Activated CD4-positive, alpha-beta T cell treated with anti-CD3 and anti-CD28 coated beads for 36 hours (primary cell): ENCODE measurements at regions of chr16 and their contacts with region 1.

Region 1: DNA sequence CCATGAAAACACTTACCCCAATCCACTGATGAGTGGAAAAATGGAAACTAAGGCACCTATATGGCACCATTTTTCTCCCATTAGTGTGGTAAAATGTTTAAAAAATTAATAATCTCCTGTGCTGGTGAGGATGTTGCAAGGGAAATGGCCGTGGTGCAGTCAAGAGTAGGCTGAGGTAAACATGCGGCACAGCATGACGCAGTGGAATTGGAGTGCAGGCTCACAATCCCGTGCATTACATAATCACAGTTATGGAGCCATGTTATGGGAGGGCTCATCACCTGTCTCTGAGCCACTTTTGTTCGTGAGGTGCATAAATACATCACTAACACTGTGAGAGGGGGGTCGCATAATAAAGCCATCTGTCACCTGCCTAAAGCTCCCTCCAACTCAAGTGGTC is 164.4 kb upstream of the XYLT1 start:
- DNase-seq: no peak
- ATAC-seq: no peak
- H3K4me3 Mint-ChIP-seq: no peak overlapping the region
- H3K27ac Mint-ChIP-seq: no peak overlapping the region
- H3K4me1 Mint-ChIP-seq: peaks cover 4% of the 10 kb centered on the region
- H3K27me3 Mint-ChIP-seq: peaks cover 24% of the 10 kb centered on the region

Region 2: DNA sequence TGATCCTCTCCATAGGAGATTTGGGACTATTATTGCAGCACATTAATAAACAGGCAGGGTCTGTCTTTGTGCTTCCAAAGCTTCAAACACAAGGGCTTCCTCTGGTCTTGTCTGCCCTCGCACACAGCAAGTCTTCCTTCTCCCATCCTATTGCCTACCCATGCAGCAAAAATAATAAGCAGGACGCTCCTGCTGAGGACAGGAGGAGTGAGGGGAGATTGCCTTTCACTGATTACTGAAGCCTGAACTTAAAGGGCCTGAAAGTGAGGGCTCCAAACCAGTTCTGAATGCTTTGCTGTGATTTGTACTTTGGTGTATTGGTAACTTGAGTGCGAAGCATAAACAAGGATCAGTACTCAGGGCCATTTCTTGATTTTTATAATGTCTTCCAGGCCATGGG is 33.2 kb after region 1 on chr16:
- CTCF ChIA-PET with region 1: no interaction called
- POLR2A ChIA-PET with region 1: no interaction called
- intact Hi-C with region 1: no loop called
- DNase-seq: no peak
- ATAC-seq: no peak
- H3K4me3 Mint-ChIP-seq: no peak overlapping the region
- H3K27ac Mint-ChIP-seq: no peak overlapping the region
- H3K4me1 Mint-ChIP-seq: no peaks in the 10 kb centered on the region
- H3K27me3 Mint-ChIP-seq: peaks cover 11% of the 10 kb centered on the region

Region 3: DNA sequence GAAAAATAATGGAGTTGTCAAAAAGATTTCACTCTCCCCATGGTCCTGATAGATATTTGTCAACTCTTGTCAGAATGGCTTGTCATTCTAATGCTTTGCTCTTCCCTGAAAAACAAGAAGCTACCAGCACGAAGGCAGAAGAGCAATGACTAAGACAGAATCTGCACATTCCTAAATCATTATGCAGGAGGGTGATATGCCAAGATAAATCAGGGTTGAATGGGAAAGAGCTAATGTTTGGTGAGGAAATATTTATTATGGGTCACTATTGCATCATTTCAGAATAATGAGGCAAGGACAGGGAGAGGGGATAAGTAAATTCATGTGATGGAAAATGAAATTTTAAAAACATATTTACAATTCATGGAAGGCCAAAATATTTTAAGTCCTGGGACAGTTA is 133.1 kb after region 1 on chr16:
- CTCF ChIA-PET with region 1: no interaction called
- POLR2A ChIA-PET with region 1: interaction called, 15 read pairs
- intact Hi-C with region 1: no loop called
- DNase-seq: no peak
- ATAC-seq: no peak
- H3K4me3 Mint-ChIP-seq: no peak overlapping the region
- H3K27ac Mint-ChIP-seq: no peak overlapping the region
- H3K4me1 Mint-ChIP-seq: no peaks in the 10 kb centered on the region
- H3K27me3 Mint-ChIP-seq: peaks cover 10% of the 10 kb centered on the region